HepG2 (cell line): ENCODE measurements at regions of chr7 and their contacts with region 1.

Region 1: GRCh38 chr7:97027427-97028234 is 3.0 kb upstream of the DLX5 start:
- DNase-seq: peak; percentile 70
- ATAC-seq: peak; percentile 86
- H3K4me3 ChIP-seq: peak overlapping the region; percentile 53 to 77 (median 68)
- H3K27ac ChIP-seq: no peak overlapping the region
- H3K4me1 ChIP-seq: peaks cover 24% of the 10 kb centered on the region
- H3K27me3 ChIP-seq: peaks cover 0 to 42% of the 10 kb centered on the region in 2 experiments; a peak in 4 of 5 replicates
- CTCF ChIP-seq: peak; percentile 96
- EP300 ChIP-seq: no peak
- POLR2A ChIP-seq: no peak
- RAD21 ChIP-seq: peak; percentile 93

Region 2: GRCh38 chr7:95916573-95917297 is 1110.9 kb before region 1 on chr7:
- CTCF ChIA-PET with region 1: no interaction called
- POLR2A ChIA-PET with region 1: no interaction called
- in situ Hi-C with region 1: loop called (anchors 25 kb)
- intact Hi-C with region 1: loop called (anchors 2 kb)
- DNase-seq: peak; percentile 52
- ATAC-seq: peak; percentile 94
- H3K4me3 ChIP-seq: peak overlapping the region; percentile 48 to 67 (median 62)
- H3K27ac ChIP-seq: no peak overlapping the region
- H3K4me1 ChIP-seq: peaks cover 13% of the 10 kb centered on the region
- H3K27me3 ChIP-seq: 0 out of 5 replicates have a peak, but pooled peaks cover 0 to 7% of the 10 kb centered on the region in 2 experiments
- CTCF ChIP-seq: peak; percentile 84
- EP300 ChIP-seq: no peak
- POLR2A ChIP-seq: no peak
- RAD21 ChIP-seq: peak; percentile 71

Region 3: DNA sequence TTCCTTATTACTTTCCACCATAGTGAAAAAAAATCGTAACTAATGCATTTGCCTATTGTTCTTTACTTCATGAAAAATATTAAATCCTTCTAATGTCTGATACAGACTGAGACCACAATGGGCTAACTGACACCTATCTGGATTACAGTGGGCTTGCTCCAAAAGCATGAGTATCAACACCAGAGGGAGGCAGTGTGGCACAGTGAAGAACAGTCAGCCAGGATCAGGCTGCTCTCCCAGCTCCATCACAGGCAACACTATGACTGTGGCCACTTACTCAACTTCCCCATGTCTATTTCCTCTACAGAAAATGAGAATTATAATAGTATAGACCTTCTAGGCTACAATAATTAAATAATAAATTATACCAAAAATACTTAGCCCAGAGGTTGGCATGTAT is 802.9 kb before region 1 on chr7:
- CTCF ChIA-PET with region 1: no interaction called
- POLR2A ChIA-PET with region 1: no interaction called
- in situ Hi-C with region 1: no loop called
- intact Hi-C with region 1: loop called (anchors 10 kb)
- DNase-seq: peak; percentile 16
- ATAC-seq: peak; percentile 90
- H3K4me3 ChIP-seq: no peak overlapping the region
- H3K27ac ChIP-seq: no peak overlapping the region
- H3K4me1 ChIP-seq: no peaks in the 10 kb centered on the region
- H3K27me3 ChIP-seq: no peaks in the 10 kb centered on the region
- CTCF ChIP-seq: peak; percentile 58
- EP300 ChIP-seq: no peak
- POLR2A ChIP-seq: no peak
- RAD21 ChIP-seq: peak; percentile 36; the same call in 1 of the 2 replicates

Region 4: DNA sequence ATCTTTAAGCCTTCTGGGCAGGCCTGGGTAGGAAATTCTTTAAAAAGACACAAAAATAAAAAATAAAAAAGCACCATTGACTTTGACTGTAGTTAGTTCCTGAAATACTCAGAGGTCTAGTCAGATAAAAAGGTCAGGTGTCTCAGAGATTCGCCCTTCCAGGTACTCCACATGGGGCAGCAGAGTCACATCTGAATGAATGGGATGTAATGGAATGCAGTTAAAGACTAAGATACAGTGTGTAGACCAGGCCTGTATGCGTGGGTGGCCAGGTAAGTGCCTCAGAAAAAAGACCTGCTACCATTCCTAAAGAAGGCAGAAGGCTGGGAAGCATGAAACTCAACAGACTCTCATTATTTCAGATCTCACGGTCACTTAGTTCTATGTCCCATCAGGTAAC is 249.4 kb before region 1 on chr7:
- CTCF ChIA-PET with region 1: interaction called, 6 read pairs
- POLR2A ChIA-PET with region 1: no interaction called
- in situ Hi-C with region 1: loop called (anchors 10 kb)
- intact Hi-C with region 1: loop called (anchors 1 kb)
- DNase-seq: peak; percentile 38
- ATAC-seq: peak; percentile 95
- H3K4me3 ChIP-seq: no peak overlapping the region
- H3K27ac ChIP-seq: no peak overlapping the region
- H3K4me1 ChIP-seq: no peaks in the 10 kb centered on the region
- H3K27me3 ChIP-seq: no peaks in the 10 kb centered on the region
- CTCF ChIP-seq: peak; percentile 66
- EP300 ChIP-seq: no peak
- POLR2A ChIP-seq: no peak
- RAD21 ChIP-seq: peak; percentile 45; the same call in 1 of the 2 replicates

Region 5: GRCh38 chr7:97016381-97017191 is 11.0 kb before region 1 on chr7:
- CTCF ChIA-PET with region 1: no interaction called
- POLR2A ChIA-PET with region 1: interaction called, 16 read pairs
- in situ Hi-C with region 1: no loop called
- intact Hi-C with region 1: no loop called
- DNase-seq: peak; percentile 76
- ATAC-seq: peak; percentile 90
- H3K4me3 ChIP-seq: peak overlapping the region; percentile 77 to 83 (median 79)
- H3K27ac ChIP-seq: peak overlapping the region; percentile 79
- H3K4me1 ChIP-seq: peaks cover 26% of the 10 kb centered on the region
- H3K27me3 ChIP-seq: no peaks in the 10 kb centered on the region
- CTCF ChIP-seq: peak; percentile 75
- EP300 ChIP-seq: no peak
- POLR2A ChIP-seq: peak; percentile 56 to 82; a peak in 3 of 4 replicates
- RAD21 ChIP-seq: peak; percentile 46; the same call in 1 of the 2 replicates